Activated T-helper 1 cell treated with anti-CD3 and anti-CD28 coated beads, Interleukin-12 subunit alpha, Interleukin-12 subunit beta, Interleukin-2, Interleukin-4 antibody, amounts not matched to agents 30 ng/mL and 10 ng/mL and 1 ng/mL, durations not matched to agents 14 hours and 24 hours and 36 hours (primary cell): ENCODE measurements at regions of chr7 and their contacts with region 1.

Region 1: GRCh38 chr7:151172273-151173141 is 5.0 kb upstream of the GBX1 start:
- DNase-seq: peak; percentile 74
- H3K4me3 Mint-ChIP-seq: no peak overlapping the region
- H3K27ac Mint-ChIP-seq: no peak overlapping the region
- H3K4me1 Mint-ChIP-seq: peaks cover 8% of the 10 kb centered on the region
- H3K27me3 Mint-ChIP-seq: peaks cover 48% of the 10 kb centered on the region

Region 2: GRCh38 chr7:150898475-150899011 is 274.0 kb before region 1 on chr7:
- intact Hi-C with region 1: loop called (anchors 1 kb)
- DNase-seq: peak; percentile 56
- H3K4me3 Mint-ChIP-seq: no peak overlapping the region
- H3K27ac Mint-ChIP-seq: no peak overlapping the region
- H3K4me1 Mint-ChIP-seq: peaks cover 6% of the 10 kb centered on the region
- H3K27me3 Mint-ChIP-seq: peaks cover 33% of the 10 kb centered on the region

Region 3: GRCh38 chr7:150962553-150963399 is 209.7 kb before region 1 on chr7:
- intact Hi-C with region 1: loop called (anchors 1 kb)
- DNase-seq: peak; percentile 39
- H3K4me3 Mint-ChIP-seq: no peak overlapping the region
- H3K27ac Mint-ChIP-seq: no peak overlapping the region
- H3K4me1 Mint-ChIP-seq: no peaks in the 10 kb centered on the region
- H3K27me3 Mint-ChIP-seq: peaks cover 28% of the 10 kb centered on the region

Region 4: GRCh38 chr7:151123822-151124464 is 48.6 kb before region 1 on chr7:
- intact Hi-C with region 1: loop called (anchors 1 kb)
- DNase-seq: peak; percentile 71
- H3K4me3 Mint-ChIP-seq: no peak overlapping the region
- H3K27ac Mint-ChIP-seq: no peak overlapping the region
- H3K4me1 Mint-ChIP-seq: no peaks in the 10 kb centered on the region
- H3K27me3 Mint-ChIP-seq: no peaks in the 10 kb centered on the region

Region 5: DNA sequence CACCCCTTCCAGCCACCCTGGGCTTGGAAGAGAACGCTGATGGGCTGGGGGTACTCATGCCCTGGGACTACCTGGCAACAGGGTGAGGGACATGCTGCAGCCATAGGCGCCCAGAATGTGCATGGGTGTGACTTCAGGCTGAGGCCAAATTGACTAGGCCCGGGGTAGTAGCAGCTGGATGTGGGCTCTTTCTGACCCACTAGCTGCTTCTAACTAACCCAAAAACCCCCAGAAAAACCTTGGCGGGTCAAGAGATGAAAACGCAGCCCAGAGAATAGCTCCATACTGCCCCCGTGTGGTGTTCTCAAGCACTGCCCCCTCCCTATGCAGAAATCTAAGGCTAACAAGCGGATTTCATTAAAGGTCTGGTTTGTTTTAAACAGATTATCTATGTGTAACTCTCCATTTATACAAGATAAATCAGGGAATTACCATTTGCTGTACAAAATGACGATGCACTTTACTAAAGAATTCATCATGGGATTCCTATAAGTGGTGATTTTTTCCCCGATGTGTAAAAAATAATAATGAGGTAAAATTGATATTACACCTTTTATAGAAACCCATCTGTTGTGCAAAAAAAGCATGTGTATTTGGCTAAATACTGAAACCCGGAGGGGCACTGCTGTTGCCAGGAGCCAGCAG is 71.8 kb after region 1 on chr7:
- intact Hi-C with region 1: loop called (anchors 1 kb)
- DNase-seq: peak; percentile 49
- H3K4me3 Mint-ChIP-seq: peak overlapping the region; percentile 49
- H3K27ac Mint-ChIP-seq: no peak overlapping the region
- H3K4me1 Mint-ChIP-seq: peaks cover 26% of the 10 kb centered on the region
- H3K27me3 Mint-ChIP-seq: peaks cover 32% of the 10 kb centered on the region

Region 6: DNA sequence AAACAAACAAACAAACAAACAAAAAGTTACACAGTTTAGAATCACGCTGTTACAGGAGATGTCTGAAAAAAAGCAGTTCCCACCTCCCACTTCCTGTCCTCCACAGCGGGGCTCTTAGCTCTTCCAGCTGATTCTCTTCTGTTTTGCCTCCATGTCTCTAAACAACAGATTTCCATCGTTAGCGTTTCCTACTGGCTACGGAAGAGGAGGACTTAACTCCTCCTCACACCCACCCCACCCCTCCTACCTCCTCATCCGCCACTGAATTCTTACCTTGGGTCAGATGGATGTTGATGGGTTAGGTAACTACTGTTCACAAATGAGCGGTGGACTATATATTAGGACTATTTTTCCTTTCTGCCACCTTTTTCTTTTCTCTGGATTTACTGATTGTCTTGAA is 132.3 kb after region 1 on chr7:
- intact Hi-C with region 1: loop called (anchors 2 kb)
- DNase-seq: no peak
- H3K4me3 Mint-ChIP-seq: peak overlapping the region; percentile 31
- H3K27ac Mint-ChIP-seq: no peak overlapping the region
- H3K4me1 Mint-ChIP-seq: peaks cover 14% of the 10 kb centered on the region
- H3K27me3 Mint-ChIP-seq: peaks cover 33% of the 10 kb centered on the region